AG04450 (cell line): ENCODE measurements at regions of chr6 and their contacts with region 1.

Region 1: GRCh38 chr6:137094411-137095008 is 49.7 kb upstream of the IL20RA start:
- DNase-seq: peak; percentile 34
- H3K4me3 ChIP-seq: no peak overlapping the region
- H3K27ac ChIP-seq: no peak overlapping the region
- H3K27me3 ChIP-seq: peaks cover 2% of the 10 kb centered on the region
- CTCF ChIP-seq: peak; percentile 77

Region 2: DNA sequence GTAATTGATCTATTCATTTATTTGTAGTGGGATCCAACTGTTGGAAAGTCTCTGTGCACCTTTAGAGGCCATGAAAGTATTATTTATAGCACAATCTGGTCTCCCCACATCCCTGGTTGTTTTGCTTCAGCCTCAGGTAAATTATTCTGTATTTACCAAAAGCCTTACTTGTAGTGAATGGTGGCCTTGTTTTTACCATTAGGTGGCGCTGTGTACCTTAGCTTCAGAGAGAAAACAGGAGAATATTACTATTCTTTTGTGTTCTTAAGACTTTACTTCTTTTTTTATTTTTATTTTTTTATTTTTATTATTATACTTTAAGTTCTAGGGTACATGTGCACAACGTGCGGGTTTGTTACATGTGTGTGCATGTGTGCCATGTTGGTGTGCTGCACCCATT is 248.5 kb before region 1 on chr6:
- CTCF ChIA-PET with region 1: interaction called, 10 read pairs
- POLR2A ChIA-PET with region 1: no interaction called
- DNase-seq: peak; percentile 39
- H3K4me3 ChIP-seq: no peak overlapping the region
- H3K27ac ChIP-seq: no peak overlapping the region
- H3K27me3 ChIP-seq: no peaks in the 10 kb centered on the region
- CTCF ChIP-seq: peak; percentile 81

Region 3: DNA sequence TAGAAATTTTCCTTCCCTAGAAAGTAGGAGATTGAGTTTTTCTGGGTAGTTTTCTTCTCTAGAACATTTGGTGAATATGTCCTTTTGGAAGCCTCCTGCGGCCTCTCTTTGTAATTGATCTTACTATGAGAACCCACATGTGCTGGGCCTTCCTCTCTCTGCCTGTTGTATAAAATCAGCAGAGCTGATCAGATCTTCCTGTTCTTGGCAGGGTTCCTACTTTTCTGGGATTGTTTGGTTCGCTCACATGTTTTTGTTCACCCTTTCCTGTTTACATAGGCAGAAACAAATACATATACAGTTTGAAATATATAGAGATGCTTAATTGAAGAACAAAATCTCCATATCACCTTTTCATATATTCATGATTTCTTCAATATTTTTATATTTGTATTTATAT is 21.1 kb after region 1 on chr6:
- CTCF ChIA-PET with region 1: interaction called, 15 read pairs
- POLR2A ChIA-PET with region 1: no interaction called
- DNase-seq: no peak
- H3K4me3 ChIP-seq: no peak overlapping the region
- H3K27ac ChIP-seq: no peak overlapping the region
- H3K27me3 ChIP-seq: no peaks in the 10 kb centered on the region
- CTCF ChIP-seq: no peak

Region 4: DNA sequence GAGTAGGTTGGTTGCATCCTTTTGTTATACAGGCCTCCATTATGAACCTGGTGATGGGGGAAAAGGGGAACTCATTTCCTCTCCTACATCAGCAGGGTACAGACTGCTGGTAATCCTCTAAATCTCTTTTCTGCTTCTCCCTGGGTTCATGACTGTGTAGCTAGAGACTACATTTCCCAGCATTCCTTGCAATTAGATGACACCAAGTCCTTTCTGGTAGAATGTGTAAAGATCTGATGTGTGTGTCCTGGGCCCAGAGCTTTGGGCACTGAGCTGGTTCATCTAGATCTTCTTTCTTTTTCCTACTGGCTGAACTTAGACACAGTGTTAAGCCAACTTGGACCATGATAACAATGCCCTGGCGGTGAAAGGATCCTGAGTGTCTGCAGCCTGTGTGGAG is 229.3 kb after region 1 on chr6:
- CTCF ChIA-PET with region 1: interaction called, 10 read pairs
- POLR2A ChIA-PET with region 1: no interaction called
- DNase-seq: no peak
- H3K4me3 ChIP-seq: no peak overlapping the region
- H3K27ac ChIP-seq: no peak overlapping the region
- H3K27me3 ChIP-seq: no peaks in the 10 kb centered on the region
- CTCF ChIP-seq: no peak

Region 5: GRCh38 chr6:137415127-137415833 is 320.8 kb after region 1 on chr6:
- CTCF ChIA-PET with region 1: interaction called, 14 read pairs
- POLR2A ChIA-PET with region 1: no interaction called
- DNase-seq: peak; percentile 7
- H3K4me3 ChIP-seq: peak overlapping the region; percentile 55
- H3K27ac ChIP-seq: peak overlapping the region; percentile 3
- H3K27me3 ChIP-seq: peaks cover 12% of the 10 kb centered on the region
- CTCF ChIP-seq: peak; percentile 84

Region 6: GRCh38 chr6:137641474-137642077 is 547.1 kb after region 1 on chr6:
- CTCF ChIA-PET with region 1: interaction called, 35 read pairs
- POLR2A ChIA-PET with region 1: no interaction called
- DNase-seq: peak; percentile 41
- H3K4me3 ChIP-seq: no peak overlapping the region
- H3K27ac ChIP-seq: no peak overlapping the region
- H3K27me3 ChIP-seq: peaks cover 2% of the 10 kb centered on the region
- CTCF ChIP-seq: peak; percentile 75